ENCODE measurements at regions of chr9 and their contacts with region 1.

Region 1: GRCh38 chr9:113807173-113808061 is 68.7 kb upstream of the ZNF618 start:
- DNase-seq: peak; percentile 42
- H3K4me3 ChIP-seq: peak overlapping the region in 1 of 2 donors; percentile 6
- H3K27ac ChIP-seq: no peak overlapping the region
- H3K4me1 ChIP-seq: no peaks in the 10 kb centered on the region
- H3K27me3 ChIP-seq: no peaks in the 10 kb centered on the region
- CTCF ChIP-seq: peak; percentile 73 to 89 (median 82)
- POLR2A ChIP-seq: no peak

Region 2: GRCh38 chr9:113876151-113876992 is 69.0 kb after region 1 on chr9 and contains the start of gene ZNF618:
- intact Hi-C with region 1: loop called (anchors 5 kb)
- DNase-seq: no peak
- H3K4me3 ChIP-seq: peak within 1 kb of the TSS; percentile 85 to 91
- H3K27ac ChIP-seq: peak within 1 kb of the TSS; percentile 65 to 66
- H3K4me1 ChIP-seq: no peaks in the 10 kb centered on the region
- H3K27me3 ChIP-seq: no peaks in the 10 kb centered on the region
- CTCF ChIP-seq: peak in 1 of 4 experiments; percentile 66
- POLR2A ChIP-seq: no peak
- total RNA-seq, gene ZNF618: 4.6 to 11.3 TPM

Region 3: GRCh38 chr9:113993838-113994540 is 186.6 kb after region 1 on chr9:
- intact Hi-C with region 1: loop called (anchors 10 kb)
- DNase-seq: peak; percentile 96
- H3K4me3 ChIP-seq: no peak overlapping the region
- H3K27ac ChIP-seq: no peak overlapping the region
- H3K4me1 ChIP-seq: peaks cover 20% of the 10 kb centered on the region
- H3K27me3 ChIP-seq: no peaks in the 10 kb centered on the region
- CTCF ChIP-seq: peak in 1 of 4 experiments; percentile 9
- POLR2A ChIP-seq: no peak

Region 4: GRCh38 chr9:114033397-114034103 is 226.1 kb after region 1 on chr9:
- intact Hi-C with region 1: loop called (anchors 2 kb)
- DNase-seq: peak; percentile 4
- H3K4me3 ChIP-seq: no peak overlapping the region
- H3K27ac ChIP-seq: no peak overlapping the region
- H3K4me1 ChIP-seq: no peaks in the 10 kb centered on the region
- H3K27me3 ChIP-seq: no peaks in the 10 kb centered on the region
- CTCF ChIP-seq: peak in 3 of 4 experiments; percentile 32 to 41 (median 39)
- POLR2A ChIP-seq: no peak